Right ventricle myocardium superior (tissue), 1 donor: ENCODE measurements at regions of chr3 and their contacts with region 1.

Region 1: GRCh38 chr3:184135149-184135910 is at the start of gene EIF2B5:
- DNase-seq: peak; percentile 95
- ATAC-seq: peak; percentile 97
- total RNA-seq, gene EIF2B5: 31.4 TPM

Region 2: GRCh38 chr3:183895296-183895695 is 240.0 kb before region 1 on chr3:
- intact Hi-C with region 1: loop called (anchors 10 kb)
- DNase-seq: no peak
- ATAC-seq: peak; percentile 72

Region 3: GRCh38 chr3:184249412-184250166 is 114.3 kb after region 1 on chr3 and contains the start of gene EEF1AKMT4:
- intact Hi-C with region 1: loop called (anchors 5 kb)
- DNase-seq: peak; percentile 97
- ATAC-seq: peak; percentile 99
- total RNA-seq, gene EEF1AKMT4: 1.6 TPM